ENCODE measurements at regions of chr2 and their contacts with region 1.

Region 1: DNA sequence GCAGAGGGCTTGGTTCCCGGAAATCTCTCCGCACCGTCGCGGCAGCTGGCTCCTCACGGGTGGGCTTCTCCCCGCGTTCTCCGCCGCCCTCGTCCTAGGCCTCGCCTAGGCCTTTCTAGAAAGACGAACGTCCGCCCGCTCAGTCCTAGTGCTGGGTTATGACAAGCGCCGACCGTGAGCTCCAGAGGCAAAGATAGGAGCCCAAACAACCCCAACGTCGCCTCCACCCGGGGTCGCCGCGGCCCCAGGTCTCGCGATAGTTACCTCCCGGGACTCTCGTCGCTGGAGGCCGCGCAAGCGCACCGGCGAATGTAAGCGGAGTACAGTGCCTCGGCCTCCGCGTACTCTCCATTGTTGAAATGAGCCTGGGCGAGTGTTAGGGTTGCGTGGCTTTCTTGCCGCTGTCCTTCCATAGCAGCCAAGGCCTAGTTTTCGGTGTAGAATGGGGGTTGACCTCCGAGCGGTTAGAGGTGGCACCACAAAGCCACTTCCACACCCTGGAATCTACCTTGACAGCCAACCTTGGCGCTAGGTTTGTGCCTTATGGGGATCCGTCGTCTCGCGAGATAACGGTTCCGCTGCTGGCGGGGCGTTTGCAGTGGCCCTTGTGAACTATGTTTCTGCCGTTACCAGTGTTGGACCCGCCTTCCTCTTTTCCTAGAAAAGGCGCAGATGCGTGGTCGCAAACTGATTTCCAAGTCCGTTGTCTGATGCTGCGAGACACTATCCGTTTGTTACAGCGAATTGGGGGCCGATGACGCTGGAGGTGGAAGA is at the start of gene TTC32:
- DNase-seq: peak; percentile 96
- ATAC-seq: peak; percentile 91
- H3K4me3 Mint-ChIP-seq: peak within 1 kb of the TSS; percentile 89
- H3K27ac Mint-ChIP-seq: peak within 1 kb of the TSS; percentile 100
- H3K4me1 Mint-ChIP-seq: peaks cover 38% of the 10 kb centered on the region
- H3K27me3 Mint-ChIP-seq: peaks cover 2% of the 10 kb centered on the region
- total RNA-seq, gene TTC32: 19.3 to 21.9 TPM

Region 2: DNA sequence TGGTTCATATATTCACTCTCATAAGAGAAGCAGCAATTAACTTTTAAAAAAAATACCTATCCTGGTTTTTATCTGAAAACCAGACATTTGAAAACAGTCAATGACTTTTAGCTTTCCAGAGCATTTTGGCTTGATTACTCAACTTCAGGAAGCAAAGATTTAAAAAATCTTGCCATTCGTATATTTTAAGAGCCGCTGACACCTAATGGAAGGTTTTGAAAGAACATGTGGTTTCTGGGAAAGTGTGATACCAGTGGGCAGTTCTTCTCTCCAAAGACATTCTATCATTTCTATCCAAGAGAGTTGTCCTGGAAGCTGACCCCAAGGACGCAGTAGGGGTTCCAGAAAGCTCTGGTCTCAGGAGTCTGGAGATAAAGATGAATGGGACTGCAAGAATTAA is 234.5 kb before region 1 on chr2:
- CTCF ChIA-PET with region 1: no interaction called
- POLR2A ChIA-PET with region 1: no interaction called
- DNase-seq: no peak
- ATAC-seq: no peak
- H3K4me3 Mint-ChIP-seq: no peak overlapping the region
- H3K27ac Mint-ChIP-seq: no peak overlapping the region
- H3K4me1 Mint-ChIP-seq: no peaks in the 10 kb centered on the region
- H3K27me3 Mint-ChIP-seq: peaks cover 12% of the 10 kb centered on the region

Region 3: GRCh38 chr2:19868705-19869580 is 32.7 kb before region 1 on chr2:
- CTCF ChIA-PET with region 1: interaction called, 3 read pairs
- POLR2A ChIA-PET with region 1: interaction called, 29 read pairs
- DNase-seq: peak; percentile 76
- ATAC-seq: peak; percentile 95
- H3K4me3 Mint-ChIP-seq: peak overlapping the region; percentile 91
- H3K27ac Mint-ChIP-seq: peak overlapping the region; percentile 93
- H3K4me1 Mint-ChIP-seq: peaks cover 22% of the 10 kb centered on the region
- H3K27me3 Mint-ChIP-seq: no peaks in the 10 kb centered on the region

Region 4: DNA sequence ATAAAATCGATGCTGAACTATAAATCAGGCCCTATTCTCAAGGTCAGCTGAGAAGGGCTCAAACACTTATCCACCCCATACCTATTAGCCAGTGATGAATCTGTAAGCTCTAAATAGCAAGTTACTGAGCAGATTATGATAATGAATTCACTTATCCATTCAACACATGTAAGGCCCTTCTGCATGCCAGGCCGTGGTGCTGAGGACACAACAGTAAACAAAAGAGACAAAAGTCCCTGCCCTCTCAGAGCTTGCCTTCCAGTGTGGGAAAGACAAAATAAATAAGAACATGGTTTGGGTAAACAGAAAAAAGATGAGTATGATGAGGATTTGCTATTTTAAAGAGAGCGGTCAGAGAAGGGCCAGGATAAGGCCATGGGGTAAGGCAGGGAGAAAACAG is 11.5 kb before region 1 on chr2:
- CTCF ChIA-PET with region 1: interaction called, 3 read pairs
- POLR2A ChIA-PET with region 1: interaction called, 18 read pairs
- DNase-seq: no peak
- ATAC-seq: no peak
- H3K4me3 Mint-ChIP-seq: no peak overlapping the region
- H3K27ac Mint-ChIP-seq: no peak overlapping the region
- H3K4me1 Mint-ChIP-seq: peaks cover 17% of the 10 kb centered on the region
- H3K27me3 Mint-ChIP-seq: no peaks in the 10 kb centered on the region